ENCODE measurements at regions of chr1 and their contacts with region 1.

Region 1: DNA sequence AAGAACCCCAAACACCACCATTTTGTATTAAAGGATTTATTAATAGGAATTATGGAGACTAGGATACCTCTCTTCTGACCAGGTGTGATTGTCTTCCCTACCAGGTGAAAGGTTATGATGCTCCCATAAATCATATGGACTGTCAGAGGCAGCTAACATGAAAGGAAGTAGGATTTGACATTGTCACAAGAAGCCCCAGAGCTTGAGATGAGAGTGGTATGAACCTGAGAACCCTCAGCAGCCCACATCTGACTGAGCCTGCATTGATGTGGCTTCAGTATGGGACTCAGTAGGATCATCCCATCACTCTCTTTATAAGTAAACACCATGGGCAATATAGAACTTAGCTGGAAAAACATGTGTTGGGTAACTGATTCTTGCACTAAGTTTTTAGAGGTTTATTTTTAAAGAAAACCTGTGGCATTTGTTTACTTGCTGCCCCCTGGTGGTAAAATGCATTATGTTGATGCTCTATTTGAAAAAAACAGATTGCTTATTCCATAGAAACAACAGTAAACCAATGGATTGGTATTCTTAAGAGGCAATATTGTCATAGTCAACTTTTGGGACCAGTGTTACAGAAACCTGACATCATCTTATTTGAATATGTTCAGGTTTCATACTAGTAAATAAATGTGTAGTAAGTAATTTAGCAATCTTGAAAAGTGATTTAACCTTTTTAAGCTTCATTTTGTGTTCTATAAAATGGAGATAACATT is 16.6 kb upstream of the CACYBP start:
- DNase-seq: no peak
- ATAC-seq: no peak
- H3K4me3 Mint-ChIP-seq: no peak overlapping the region
- H3K27ac Mint-ChIP-seq: no peak overlapping the region
- H3K4me1 Mint-ChIP-seq: peaks cover 10% of the 10 kb centered on the region
- H3K27me3 Mint-ChIP-seq: no peaks in the 10 kb centered on the region
- CTCF ChIP-seq: peak; percentile 48

Region 2: GRCh38 chr1:174769961-174770549 is 213.1 kb before region 1 on chr1:
- CTCF ChIA-PET with region 1: interaction called, 39 read pairs
- POLR2A ChIA-PET with region 1: no interaction called
- intact Hi-C with region 1: loop called (anchors 1 kb)
- DNase-seq: no peak
- ATAC-seq: peak; percentile 52
- H3K4me3 Mint-ChIP-seq: no peak overlapping the region
- H3K27ac Mint-ChIP-seq: no peak overlapping the region
- H3K4me1 Mint-ChIP-seq: peaks cover 6% of the 10 kb centered on the region
- H3K27me3 Mint-ChIP-seq: no peaks in the 10 kb centered on the region
- CTCF ChIP-seq: no peak

Region 3: GRCh38 chr1:174942547-174943255 is 40.4 kb before region 1 on chr1:
- CTCF ChIA-PET with region 1: no interaction called
- POLR2A ChIA-PET with region 1: no interaction called
- intact Hi-C with region 1: loop called (anchors 5 kb)
- DNase-seq: no peak
- ATAC-seq: peak; percentile 65
- H3K4me3 Mint-ChIP-seq: no peak overlapping the region
- H3K27ac Mint-ChIP-seq: no peak overlapping the region
- H3K4me1 Mint-ChIP-seq: peaks cover 18% of the 10 kb centered on the region
- H3K27me3 Mint-ChIP-seq: no peaks in the 10 kb centered on the region
- CTCF ChIP-seq: no peak

Region 4: DNA sequence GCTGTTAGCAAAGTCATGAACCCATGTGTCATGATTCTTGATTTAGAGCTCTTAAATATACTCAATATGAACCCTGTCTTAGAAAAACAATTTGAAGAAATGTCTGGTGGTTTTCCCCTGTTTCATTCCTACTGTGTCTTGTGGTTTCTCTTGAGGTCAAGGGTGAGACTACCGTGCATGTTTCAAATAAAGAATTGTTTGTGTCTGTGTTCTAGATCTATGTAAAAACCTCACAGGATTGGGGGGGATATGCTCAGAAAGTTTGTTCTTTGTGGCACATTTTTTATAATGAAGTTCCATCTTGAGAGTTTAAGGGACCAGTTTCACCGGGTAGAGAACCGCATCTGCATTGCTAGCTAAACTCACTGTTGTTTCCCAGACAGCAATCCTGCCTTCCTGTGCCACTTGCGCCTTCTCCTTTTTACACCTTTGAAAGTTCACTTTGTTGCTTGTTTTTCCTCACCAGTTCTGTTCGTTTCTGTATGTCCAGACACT is 14.3 kb before region 1 on chr1:
- CTCF ChIA-PET with region 1: interaction called, 9 read pairs
- POLR2A ChIA-PET with region 1: interaction called, 3 read pairs
- intact Hi-C with region 1: loop called (anchors 2 kb)
- DNase-seq: no peak
- ATAC-seq: peak; percentile 64
- H3K4me3 Mint-ChIP-seq: peak overlapping the region; percentile 73
- H3K27ac Mint-ChIP-seq: peak overlapping the region; percentile 85
- H3K4me1 Mint-ChIP-seq: peaks cover 68% of the 10 kb centered on the region
- H3K27me3 Mint-ChIP-seq: no peaks in the 10 kb centered on the region
- CTCF ChIP-seq: no peak

Region 5: GRCh38 chr1:175043824-175044223 is 60.7 kb after region 1 on chr1:
- CTCF ChIA-PET with region 1: no interaction called
- POLR2A ChIA-PET with region 1: no interaction called
- intact Hi-C with region 1: no loop called
- DNase-seq: no peak
- ATAC-seq: no peak
- H3K4me3 Mint-ChIP-seq: no peak overlapping the region
- H3K27ac Mint-ChIP-seq: no peak overlapping the region
- H3K4me1 Mint-ChIP-seq: no peaks in the 10 kb centered on the region
- H3K27me3 Mint-ChIP-seq: peaks cover 21% of the 10 kb centered on the region
- CTCF ChIP-seq: no peak

Measured in activated B cell treated with CpG ODN at 0.5 μM for 24 hours (primary cell).